Heart left ventricle (tissue), 16 donors: ENCODE measurements at regions of chr1 and their contacts with region 1.

Region 1: GRCh38 chr1:151459331-151460046 is at the start of gene POGZ:
- DNase-seq: peak; percentile 98 to 99 (median 98)
- ATAC-seq: peak; percentile 95 to 97 (median 96)
- H3K4me3 ChIP-seq: peak within 1 kb of the TSS; percentile 60 to 89 (median 79)
- H3K27ac ChIP-seq: peak within 1 kb of the TSS; percentile 90 to 99 (median 97)
- H3K4me1 ChIP-seq: peaks cover 0 to 36% (median 23%) of the 10 kb centered on the region in 12 donors
- H3K27me3 ChIP-seq: peaks cover 0 to 6% (median 0%) of the 10 kb centered on the region in 9 donors
- CTCF ChIP-seq: no peak
- POLR2A ChIP-seq: no peak
- total RNA-seq, gene POGZ: 26.0 to 64.3 (median 35.5) TPM

Region 2: GRCh38 chr1:151472856-151473731 is 13.6 kb after region 1 on chr1:
- intact Hi-C with region 1: loop called in 5 of 10 experiments (anchors 1 to 2 kb)
- DNase-seq: peak; percentile 41 to 71 (median 60)
- ATAC-seq: peak; percentile 26 to 90 (median 79)
- H3K4me3 ChIP-seq: peak overlapping the region; percentile 32 to 75 (median 66)
- H3K27ac ChIP-seq: peak overlapping the region; percentile 14 to 85 (median 76)
- H3K4me1 ChIP-seq: peaks cover 0 to 13% (median 4%) of the 10 kb centered on the region in 12 donors
- H3K27me3 ChIP-seq: no peaks in the 10 kb centered on the region
- CTCF ChIP-seq: no peak
- POLR2A ChIP-seq: no peak

Region 3: DNA sequence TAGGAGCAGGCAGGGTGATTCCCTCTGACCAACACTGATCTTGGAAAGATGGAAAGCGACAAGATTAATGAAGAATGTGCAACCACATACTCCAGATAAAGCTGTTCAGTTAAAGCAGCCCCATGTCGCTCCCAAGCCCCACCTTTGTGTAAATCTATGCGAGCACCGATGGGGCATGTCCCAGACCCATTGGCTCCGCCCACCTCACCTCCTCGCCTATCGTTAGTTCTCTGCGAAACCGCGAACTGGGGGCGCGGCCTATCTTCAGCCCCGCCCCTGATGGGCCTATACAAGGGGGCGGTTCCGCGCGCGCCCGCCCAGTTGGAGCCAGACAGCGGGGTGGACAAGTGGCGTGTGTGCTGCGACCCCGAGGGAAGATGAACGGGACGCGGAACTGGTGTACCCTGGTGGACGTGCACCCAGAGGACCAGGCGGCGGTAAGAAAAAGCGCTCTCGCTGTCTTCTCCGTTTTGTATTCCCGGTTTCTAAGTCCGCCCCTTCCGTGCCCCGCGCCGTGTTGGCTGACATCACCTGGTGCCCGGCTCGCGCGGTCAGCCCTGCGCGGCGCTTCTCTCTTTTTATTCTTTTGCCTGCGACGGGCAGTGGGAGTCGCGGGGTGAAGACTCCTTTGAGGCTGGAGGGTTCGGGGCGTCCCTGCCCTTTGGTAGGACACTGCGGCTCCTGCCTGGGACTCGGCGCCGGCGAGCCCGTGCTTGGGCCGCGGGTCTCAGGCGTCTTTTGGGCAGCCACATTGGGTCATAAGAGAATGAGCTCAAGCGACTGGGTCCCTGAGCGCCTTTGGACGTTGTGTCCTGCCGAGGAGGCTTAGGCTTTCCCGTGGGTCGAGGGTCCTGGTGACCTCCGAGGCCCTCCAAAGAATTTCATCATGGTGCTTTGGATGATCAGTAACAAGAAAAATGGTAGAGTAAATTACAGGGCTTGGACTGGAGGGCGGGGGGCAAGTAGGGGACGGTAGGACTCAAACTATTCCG is 80.8 kb after region 1 on chr1 and contains the start of gene TUFT1:
- intact Hi-C with region 1: loop called in 1 of 10 experiments (anchors 5 kb)
- DNase-seq: peak; percentile 89 to 94 (median 94)
- ATAC-seq: peak; percentile 96 to 98 (median 98)
- H3K4me3 ChIP-seq: peak within 1 kb of the TSS; percentile 38 to 82 (median 76)
- H3K27ac ChIP-seq: peak within 1 kb of the TSS in 10 of 12 donors; percentile 28 to 86 (median 62)
- H3K4me1 ChIP-seq: peaks cover 0 to 21% (median 12%) of the 10 kb centered on the region in 12 donors
- H3K27me3 ChIP-seq: no peaks in the 10 kb centered on the region
- CTCF ChIP-seq: no peak
- POLR2A ChIP-seq: peak; percentile 83 to 88
- total RNA-seq, gene TUFT1: 2.1 to 13.6 (median 4.3) TPM

Region 4: GRCh38 chr1:151909150-151910149 is 450.0 kb after region 1 on chr1 and contains the start of gene THEM4:
- intact Hi-C with region 1: loop called in 1 of 10 experiments (anchors 2 kb)
- DNase-seq: peak; percentile 97 to 99 (median 99)
- ATAC-seq: peak; percentile 99
- H3K4me3 ChIP-seq: peak within 1 kb of the TSS; percentile 41 to 82 (median 72)
- H3K27ac ChIP-seq: peak within 1 kb of the TSS; percentile 74 to 96 (median 89)
- H3K4me1 ChIP-seq: peaks cover 0 to 32% (median 14%) of the 10 kb centered on the region in 12 donors
- H3K27me3 ChIP-seq: no peaks in the 10 kb centered on the region
- CTCF ChIP-seq: peak in 11 of 12 donors; percentile 6 to 60 (median 34)
- POLR2A ChIP-seq: peak in 1 of 2 donors; percentile 88
- total RNA-seq, gene THEM4: 14.2 to 17.0 (median 15.0) TPM